Dorsolateral prefrontal cortex (tissue), 120 donors: ENCODE measurements at regions of chr1 and their contacts with region 1.

Region 1: DNA sequence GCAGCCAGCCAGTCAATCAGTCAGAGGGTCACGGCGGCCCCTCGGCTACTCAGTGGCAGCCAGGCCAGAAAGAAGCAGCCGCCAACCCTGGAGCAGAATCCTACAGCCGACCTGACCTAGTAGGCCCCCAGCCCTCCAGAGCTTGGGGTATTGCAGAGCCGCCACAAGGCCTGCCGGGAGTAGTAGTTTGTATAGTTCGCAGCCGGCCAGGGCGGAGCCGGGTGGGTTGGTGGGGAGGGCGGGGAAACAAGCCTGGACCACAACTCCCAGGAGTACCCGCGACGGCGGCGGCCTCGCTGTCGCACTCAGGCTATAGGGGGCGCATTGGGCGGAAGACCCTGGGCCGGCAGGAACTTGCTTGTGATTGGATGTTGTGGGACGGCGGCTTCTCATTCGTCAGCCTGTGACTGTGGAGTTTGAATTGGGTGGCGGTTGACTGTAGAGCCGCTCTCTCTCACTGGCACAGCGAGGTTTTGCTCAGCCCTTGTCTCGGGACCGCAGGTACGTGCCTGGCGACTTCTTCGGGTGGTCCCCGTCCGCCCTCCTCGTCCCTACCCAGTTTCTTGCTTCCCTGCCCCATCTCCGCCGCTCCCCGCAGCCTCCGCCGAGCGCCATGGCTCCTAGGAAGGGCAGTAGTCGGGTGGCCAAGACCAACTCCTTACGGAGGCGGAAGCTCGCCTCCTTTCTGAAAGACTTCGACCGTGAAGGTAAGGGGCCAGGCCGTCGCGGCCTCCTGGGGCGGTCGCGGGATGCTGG is at the start of gene CDCA8:
- DNase-seq: peak; percentile 94 to 99 (median 98)
- H3K4me3 ChIP-seq: peak within 1 kb of the TSS; percentile 60 to 100 (median 89)
- H3K27ac ChIP-seq: peak within 1 kb of the TSS in 49 of 59 donors; percentile 6 to 90 (median 67)
- H3K27me3 ChIP-seq: no peaks in the 10 kb centered on the region
- CTCF ChIP-seq: peak; percentile 72 to 93 (median 85)
- total RNA-seq, gene CDCA8: 0.30 to 1.9 (median 0.93) TPM

Region 2: GRCh38 chr1:37595440-37596319 is 96.6 kb before region 1 on chr1 and contains the start of gene GNL2:
- intact Hi-C with region 1: loop called (anchors 5 kb)
- DNase-seq: peak; percentile 93 to 98 (median 96)
- H3K4me3 ChIP-seq: peak within 1 kb of the TSS; percentile 63 to 99 (median 91)
- H3K27ac ChIP-seq: peak within 1 kb of the TSS in 51 of 59 donors; percentile 11 to 89 (median 57)
- H3K27me3 ChIP-seq: no peaks in the 10 kb centered on the region
- CTCF ChIP-seq: peak in 42 of 56 donors; percentile 9 to 61 (median 32)
- total RNA-seq, gene GNL2: 13.0 to 31.1 (median 20.2) TPM

Region 3: DNA sequence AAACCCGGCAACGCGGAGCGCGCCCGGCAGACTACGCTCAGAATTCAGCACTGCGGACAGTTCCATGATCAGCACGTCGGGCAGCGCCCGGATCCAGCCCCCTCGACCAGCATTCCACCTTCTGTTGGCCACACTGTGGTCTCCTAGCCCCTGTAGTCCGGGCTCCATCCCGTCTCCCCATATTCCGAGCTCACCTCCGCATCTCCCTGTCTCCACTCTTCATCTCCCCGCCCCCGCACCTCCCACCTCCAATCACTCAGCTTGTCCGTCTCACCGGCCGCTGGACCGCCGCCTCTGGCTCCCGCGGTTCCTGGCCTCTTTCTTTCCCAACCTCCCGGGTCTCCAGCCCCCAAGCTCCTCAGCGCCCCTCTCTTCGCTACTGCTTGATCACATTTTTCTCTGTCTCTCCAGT is 72.2 kb after region 1 on chr1:
- intact Hi-C with region 1: loop called in 1 of 2 experiments (anchors 10 kb)
- DNase-seq: peak in 6 of 10 donors; percentile 28 to 79 (median 54)
- H3K4me3 ChIP-seq: peak overlapping the region in 58 of 59 donors; percentile 7 to 68 (median 54)
- H3K27ac ChIP-seq: peak overlapping the region in 21 of 59 donors; percentile 9 to 74 (median 52)
- H3K27me3 ChIP-seq: peaks cover 0 to 68% (median 36%) of the 10 kb centered on the region in 45 donors
- CTCF ChIP-seq: peak in 1 of 56 donors; percentile 9

Region 4: DNA sequence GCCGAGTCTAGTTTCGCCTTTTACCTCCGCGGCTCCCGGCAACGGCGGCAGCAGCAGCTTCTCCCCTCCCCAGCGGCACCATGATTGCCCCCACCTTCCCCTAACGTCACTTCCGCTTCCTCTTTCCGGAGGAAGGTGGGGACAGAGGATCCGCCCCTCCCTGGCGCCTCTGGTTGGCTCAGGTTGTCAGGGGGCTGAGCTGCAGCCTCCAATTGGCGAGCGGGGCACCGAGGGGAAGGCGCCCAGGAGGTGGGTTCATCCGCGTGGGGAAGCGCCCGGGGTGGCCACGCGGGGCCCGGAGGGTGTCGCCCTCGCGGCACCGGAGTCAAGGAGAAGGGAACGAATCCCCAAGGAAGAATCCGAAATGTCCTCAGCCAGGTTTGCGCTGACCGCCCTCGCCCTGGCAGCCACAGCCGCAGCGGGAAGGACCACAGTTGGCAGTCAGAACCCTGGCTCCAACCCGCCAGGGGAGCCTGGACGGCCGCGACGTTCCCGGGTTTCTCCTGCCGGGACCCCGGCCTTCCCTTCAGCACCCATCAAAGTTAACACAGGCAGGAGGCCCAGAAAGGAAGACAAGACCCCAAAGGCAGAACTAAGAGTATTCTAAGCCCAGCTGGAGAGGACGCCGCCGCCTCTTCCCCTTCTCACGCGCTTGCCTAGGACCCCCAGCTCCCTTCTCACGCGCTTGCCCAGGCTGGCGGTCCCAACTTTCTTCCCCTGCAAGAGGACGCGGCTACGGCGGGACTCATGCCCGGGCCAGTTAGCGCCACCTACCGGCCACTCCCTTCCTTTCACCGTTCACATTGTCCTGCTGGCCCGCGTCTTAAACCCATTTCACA is 167.5 kb after region 1 on chr1 and contains the start of gene MTF1:
- intact Hi-C with region 1: loop called (anchors 1 to 2 kb)
- DNase-seq: peak; percentile 89 to 98 (median 97)
- H3K4me3 ChIP-seq: peak within 1 kb of the TSS; percentile 76 to 100 (median 93)
- H3K27ac ChIP-seq: peak within 1 kb of the TSS; percentile 60 to 95 (median 88)
- H3K27me3 ChIP-seq: no peaks in the 10 kb centered on the region
- CTCF ChIP-seq: peak; percentile 68 to 98 (median 89)
- total RNA-seq, gene MTF1: 12.4 to 40.5 (median 22.6) TPM